Activated T-helper 2 cell treated with anti-CD3 and anti-CD28 coated beads, Interferon-gamma antibody, Interleukin-2, Interleukin-4, amounts not matched to agents 10 μg/mL and 5 μg/mL and 100 μg/mL, durations not matched to agents 14 hours and 24 hours and 36 hours (primary cell): ENCODE measurements at regions of chr7 and their contacts with region 1.

Region 1: GRCh38 chr7:121278120-121279021 is 50.4 kb upstream of the WNT16 start:
- DNase-seq: no peak
- H3K4me3 Mint-ChIP-seq: no peak overlapping the region
- H3K27ac Mint-ChIP-seq: peak overlapping the region; percentile 79
- H3K4me1 Mint-ChIP-seq: peaks cover 37% of the 10 kb centered on the region
- H3K27me3 Mint-ChIP-seq: peaks cover 7% of the 10 kb centered on the region

Region 2: GRCh38 chr7:119988401-119988800 is 1290.0 kb before region 1 on chr7:
- intact Hi-C with region 1: no loop called
- DNase-seq: no peak
- H3K4me3 Mint-ChIP-seq: no peak overlapping the region
- H3K27ac Mint-ChIP-seq: no peak overlapping the region
- H3K4me1 Mint-ChIP-seq: no peaks in the 10 kb centered on the region
- H3K27me3 Mint-ChIP-seq: no peaks in the 10 kb centered on the region

Region 3: DNA sequence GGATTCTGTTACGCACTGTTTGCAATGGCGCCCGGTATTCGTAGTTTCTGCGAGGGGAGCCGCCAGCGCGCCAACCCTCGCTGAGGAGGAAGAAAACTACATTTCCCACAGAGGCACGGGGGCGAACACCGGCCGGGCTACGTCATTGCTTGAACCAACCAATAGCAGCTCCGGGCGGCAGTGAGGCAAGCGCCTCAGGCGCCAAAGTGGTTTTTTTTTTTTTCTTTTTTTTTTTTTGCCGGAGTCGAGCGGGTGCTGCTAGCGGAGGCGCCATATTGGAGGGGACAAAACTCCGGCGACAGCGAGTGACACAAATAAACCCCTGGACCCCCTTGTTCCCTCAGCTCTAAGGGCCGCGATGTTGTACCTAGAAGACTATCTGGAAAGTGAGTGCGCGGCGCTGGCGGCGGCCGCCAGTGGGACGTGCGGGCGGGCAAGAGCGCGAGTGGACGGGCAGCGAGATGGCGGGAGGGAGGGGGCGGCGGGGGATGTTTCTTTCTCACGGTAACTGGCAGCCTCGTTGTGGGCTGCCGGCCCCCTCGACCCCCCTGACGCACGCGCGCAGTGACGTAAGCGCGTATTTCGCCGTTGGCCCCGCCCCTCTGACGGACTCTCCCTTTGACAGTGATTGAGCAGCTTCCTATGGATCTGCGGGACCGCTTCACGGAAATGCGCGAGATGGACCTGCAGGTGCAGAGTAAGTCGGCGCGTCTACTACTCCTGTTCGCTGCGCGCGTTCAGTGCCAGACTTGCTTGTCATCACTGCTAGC is 327.6 kb before region 1 on chr7 and contains the start of gene ING3:
- intact Hi-C with region 1: loop called (anchors 2 kb)
- DNase-seq: peak; percentile 97
- H3K4me3 Mint-ChIP-seq: peak within 1 kb of the TSS; percentile 91
- H3K27ac Mint-ChIP-seq: peak within 1 kb of the TSS; percentile 97
- H3K4me1 Mint-ChIP-seq: peaks cover 24% of the 10 kb centered on the region
- H3K27me3 Mint-ChIP-seq: peaks cover 4% of the 10 kb centered on the region
- total RNA-seq, gene ING3: 22.6 and 22.9 TPM in 2 replicates

Region 4: DNA sequence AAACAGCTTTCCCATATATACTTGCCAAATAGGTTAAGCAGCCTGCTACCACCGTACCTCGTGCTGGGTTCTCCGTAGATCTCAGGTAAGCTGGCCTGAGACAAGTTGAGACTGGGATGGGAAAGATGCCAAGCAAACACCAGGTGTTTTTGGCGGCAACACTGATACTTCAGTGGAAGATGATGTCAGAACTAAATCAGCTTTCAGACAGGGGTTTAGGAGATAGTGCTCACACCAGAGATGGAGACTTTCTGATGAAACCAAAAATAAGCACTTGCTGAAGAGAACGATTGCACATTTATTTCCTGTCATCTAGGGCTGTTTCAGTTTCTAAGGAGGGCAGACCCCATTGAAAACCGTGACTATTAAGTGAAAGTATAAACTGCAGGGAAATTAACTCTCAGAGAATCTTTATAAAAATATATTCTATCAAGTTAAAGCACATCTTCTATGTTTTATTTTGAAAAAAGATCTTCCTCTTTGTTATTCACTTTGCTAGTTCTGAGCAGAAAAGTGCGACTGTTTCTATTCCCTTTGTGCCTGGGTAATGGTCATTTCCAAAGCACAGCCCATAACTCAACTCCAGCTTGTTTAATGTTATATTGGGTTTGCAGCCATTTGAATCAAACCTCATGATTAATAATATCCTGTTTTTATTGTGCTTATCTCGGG is 140.0 kb before region 1 on chr7:
- intact Hi-C with region 1: loop called (anchors 1 kb)
- DNase-seq: no peak
- H3K4me3 Mint-ChIP-seq: no peak overlapping the region
- H3K27ac Mint-ChIP-seq: no peak overlapping the region
- H3K4me1 Mint-ChIP-seq: peaks cover 21% of the 10 kb centered on the region
- H3K27me3 Mint-ChIP-seq: peaks cover 5% of the 10 kb centered on the region

Region 5: GRCh38 chr7:121372376-121373010 is 94.1 kb after region 1 on chr7:
- intact Hi-C with region 1: loop called (anchors 2 kb)
- DNase-seq: no peak
- H3K4me3 Mint-ChIP-seq: peak overlapping the region; percentile 18
- H3K27ac Mint-ChIP-seq: peak overlapping the region; percentile 50
- H3K4me1 Mint-ChIP-seq: peaks cover 57% of the 10 kb centered on the region
- H3K27me3 Mint-ChIP-seq: no peaks in the 10 kb centered on the region

Region 6: DNA sequence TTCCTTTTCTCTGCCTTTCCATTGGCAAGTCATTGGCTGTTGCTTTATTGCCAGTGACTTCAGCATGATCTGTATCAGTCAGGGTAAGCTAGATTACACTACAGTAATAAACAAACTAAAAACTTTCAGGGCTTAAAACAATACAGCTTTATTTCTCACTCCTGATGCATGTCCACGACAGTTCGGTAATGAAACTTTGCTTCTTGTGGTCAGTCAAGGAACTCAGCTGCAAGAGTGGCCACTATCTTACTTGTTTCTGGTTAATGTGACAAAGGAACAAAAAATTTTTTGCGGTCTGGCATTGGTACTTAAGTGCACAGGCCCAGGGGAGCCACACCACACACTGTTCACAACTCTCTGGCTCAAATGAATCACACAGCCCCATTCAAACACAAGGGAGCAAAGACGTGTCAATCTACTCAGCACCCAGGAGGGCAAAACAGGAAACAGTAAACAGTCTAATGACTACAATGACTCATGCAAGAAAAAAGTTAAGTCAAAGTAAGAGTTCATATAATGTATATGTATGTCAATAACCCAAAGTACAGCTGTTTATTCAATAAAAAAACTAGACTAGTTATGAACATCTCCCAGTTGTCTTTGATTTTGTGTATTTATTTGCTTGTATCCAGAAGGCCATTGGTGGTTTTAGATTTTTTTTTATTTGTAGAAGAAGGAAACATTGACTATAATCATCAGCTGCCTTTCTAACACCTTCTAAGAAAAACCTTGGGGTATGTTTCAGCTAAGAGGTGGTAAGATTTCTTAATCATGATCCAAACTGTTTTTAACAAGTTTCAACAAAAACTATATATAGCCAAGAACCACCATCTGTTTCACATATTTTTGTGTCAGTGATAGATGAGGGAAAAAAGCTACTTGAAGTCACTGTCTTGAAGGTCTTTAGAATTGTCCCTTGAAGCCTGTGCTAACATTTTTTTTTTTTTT is 252.1 kb after region 1 on chr7:
- intact Hi-C with region 1: loop called (anchors 1 kb)
- DNase-seq: peak; percentile 62
- H3K4me3 Mint-ChIP-seq: peak overlapping the region; percentile 45
- H3K27ac Mint-ChIP-seq: peak overlapping the region; percentile 94
- H3K4me1 Mint-ChIP-seq: peaks cover 40% of the 10 kb centered on the region
- H3K27me3 Mint-ChIP-seq: no peaks in the 10 kb centered on the region